GM10248 (cell line): ENCODE measurements at regions of chr1 and their contacts with region 1.

Region 1: DNA sequence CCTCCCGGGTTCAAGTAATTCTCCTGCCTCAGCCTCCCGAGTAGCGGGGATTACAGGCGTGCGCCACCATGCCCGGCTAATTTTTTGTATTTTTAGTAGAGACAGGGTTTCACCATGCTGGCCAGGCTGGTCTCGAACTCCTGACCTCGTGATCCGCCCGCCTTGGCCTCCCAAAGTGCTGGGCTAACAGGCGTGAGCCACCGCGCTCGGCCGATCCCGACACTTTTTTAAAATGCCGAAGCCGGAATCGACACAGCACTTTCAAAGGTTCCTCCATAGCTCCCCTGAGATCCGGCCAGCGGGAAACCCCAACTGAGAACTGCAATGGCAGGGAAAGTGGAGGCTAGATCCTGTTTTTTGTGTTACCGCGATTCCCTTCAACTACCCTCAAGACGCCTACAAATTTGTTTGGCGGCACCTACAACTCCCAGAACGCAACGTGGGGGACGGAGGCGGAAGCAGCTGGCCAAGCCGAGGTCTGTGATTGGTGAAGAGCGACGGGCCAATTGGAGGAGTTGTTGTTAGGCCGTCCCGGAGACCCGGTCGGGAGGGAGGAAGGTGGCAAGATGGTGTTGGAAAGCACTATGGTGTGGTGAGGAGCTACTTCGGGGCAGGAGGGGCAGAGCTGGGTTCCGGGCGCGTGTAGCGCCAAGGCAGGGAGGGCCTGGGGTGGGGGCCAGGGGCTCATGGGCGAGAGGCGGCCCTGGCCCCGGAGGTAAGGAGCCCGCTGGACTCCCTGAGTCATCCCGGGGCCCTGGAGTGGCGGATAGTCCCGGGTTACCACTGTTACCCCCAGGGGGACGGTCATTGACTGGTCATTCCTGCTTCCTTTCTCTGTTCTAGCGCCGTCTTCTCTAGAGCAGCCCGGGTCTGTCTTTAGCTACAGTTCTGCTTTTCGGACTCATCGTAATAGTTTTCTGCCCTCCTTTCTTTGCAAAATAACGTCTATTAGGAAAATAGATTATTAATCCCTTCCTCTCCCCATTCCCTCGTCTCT is at the start of gene PSMD4:
- DNase-seq: peak; percentile 99
- CTCF ChIP-seq: no peak

Region 2: GRCh38 chr1:150906341-150906740 is 348.2 kb before region 1 on chr1:
- CTCF ChIA-PET with region 1: no interaction called
- POLR2A ChIA-PET with region 1: no interaction called
- DNase-seq: no peak
- CTCF ChIP-seq: no peak

Region 3: DNA sequence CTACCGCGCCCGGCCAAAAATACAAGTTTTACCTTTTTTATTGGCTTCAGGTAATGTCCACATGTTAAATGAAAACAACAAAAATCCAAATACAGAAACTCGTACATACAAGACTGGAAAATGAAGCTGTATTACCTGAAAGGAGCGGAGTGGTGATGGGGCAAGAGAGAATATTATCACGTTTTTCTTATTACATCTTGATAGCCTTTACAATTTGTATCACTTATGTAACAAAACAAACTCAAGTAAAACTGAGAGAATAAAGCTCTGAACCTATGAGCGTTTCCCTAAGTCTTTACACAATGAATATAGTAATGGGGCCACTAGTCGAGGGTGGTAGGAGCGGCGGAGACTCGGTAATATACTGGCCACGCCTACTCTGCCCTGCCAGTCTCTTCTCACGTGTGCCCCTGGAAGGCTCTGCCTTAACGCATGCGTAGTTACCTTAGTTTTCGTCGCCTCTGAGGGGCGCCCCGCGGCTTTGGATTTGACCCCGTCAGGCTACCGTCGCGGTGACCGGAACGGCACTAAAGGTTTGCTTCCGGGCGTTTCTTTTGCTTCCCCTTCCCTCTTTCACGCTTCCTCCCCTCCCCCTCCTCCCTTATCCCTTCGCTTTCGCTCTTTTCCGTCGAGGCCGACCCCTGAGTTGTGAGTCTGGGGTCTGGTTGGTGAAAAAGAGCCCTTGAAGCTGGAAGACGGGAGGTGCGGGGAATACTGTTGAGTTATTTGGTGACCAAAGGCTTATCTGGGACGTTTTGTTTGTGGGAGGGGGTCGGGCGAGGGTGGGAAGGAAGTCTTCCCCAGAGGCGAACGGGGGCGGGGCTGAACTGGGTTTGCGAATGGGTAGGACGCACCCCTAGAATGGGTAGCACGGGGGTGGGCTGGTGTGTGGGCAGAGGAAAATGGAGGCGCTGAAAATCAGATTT is 328.4 kb before region 1 on chr1 and contains the start of gene SETDB1:
- CTCF ChIA-PET with region 1: no interaction called
- POLR2A ChIA-PET with region 1: no interaction called
- DNase-seq: peak; percentile 92
- CTCF ChIP-seq: peak; percentile 23

Region 4: GRCh38 chr1:151189638-151190445 is 64.7 kb before region 1 on chr1 and contains the start of gene VPS72:
- CTCF ChIA-PET with region 1: interaction called, 15 read pairs
- POLR2A ChIA-PET with region 1: interaction called, 3 read pairs
- DNase-seq: peak; percentile 94
- CTCF ChIP-seq: no peak

Region 5: GRCh38 chr1:151222130-151222529 is 32.4 kb before region 1 on chr1:
- CTCF ChIA-PET with region 1: interaction called, 10 read pairs
- POLR2A ChIA-PET with region 1: no interaction called
- DNase-seq: no peak
- CTCF ChIP-seq: no peak

Region 6: GRCh38 chr1:151238467-151238739 is 16.1 kb before region 1 on chr1:
- CTCF ChIA-PET with region 1: interaction called, 33 read pairs
- POLR2A ChIA-PET with region 1: no interaction called
- DNase-seq: no peak
- CTCF ChIP-seq: no peak

Region 7: GRCh38 chr1:151273925-151274466 is 19.5 kb after region 1 on chr1:
- CTCF ChIA-PET with region 1: interaction called, 16 read pairs
- POLR2A ChIA-PET with region 1: interaction called, 3 read pairs
- DNase-seq: no peak
- CTCF ChIP-seq: no peak

Region 8: DNA sequence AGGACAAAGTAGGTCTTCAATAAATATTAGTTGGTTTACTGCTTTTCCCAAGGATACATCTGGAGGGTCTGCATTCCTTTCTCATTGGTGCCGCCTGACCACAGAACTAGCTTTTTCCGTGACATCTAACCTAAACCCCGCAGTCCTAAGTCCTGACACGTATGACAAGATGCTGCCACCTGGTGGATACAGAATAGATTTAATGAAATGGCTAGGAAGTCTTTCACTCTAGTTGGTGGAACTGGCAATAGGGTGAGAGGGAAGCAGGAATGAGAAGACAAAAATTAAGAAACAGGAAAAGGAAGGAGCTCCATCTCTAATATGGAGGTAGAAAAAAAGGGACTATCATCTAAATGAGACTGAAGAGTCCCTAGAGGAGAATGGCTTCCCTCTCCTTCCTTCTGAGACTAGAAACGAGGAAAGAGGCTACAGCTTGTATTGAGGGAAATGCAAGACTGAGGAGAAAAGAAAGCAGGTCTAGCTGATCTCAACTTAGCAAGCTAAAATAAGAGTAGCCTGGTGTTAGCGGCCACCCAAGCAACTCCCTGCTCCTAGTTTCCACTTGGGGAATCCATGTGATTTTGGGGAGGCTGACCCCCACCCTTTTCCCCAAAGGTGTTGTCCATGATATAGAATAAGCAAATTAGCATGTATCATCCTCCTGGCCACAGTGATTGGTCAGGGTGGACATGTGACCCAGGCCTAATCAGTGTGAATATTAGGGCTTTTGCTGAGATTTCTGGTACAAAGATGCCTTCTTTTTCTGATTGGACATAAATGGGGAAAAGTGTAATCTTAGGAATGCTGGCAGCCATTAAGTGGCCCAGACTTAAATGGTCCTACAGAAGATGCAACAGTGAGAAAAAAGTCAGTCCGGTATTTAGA is 86.6 kb after region 1 on chr1:
- CTCF ChIA-PET with region 1: interaction called, 17 read pairs
- POLR2A ChIA-PET with region 1: no interaction called
- DNase-seq: peak; percentile 62
- CTCF ChIP-seq: peak; percentile 64

Region 9: GRCh38 chr1:151435160-151435559 is 180.6 kb after region 1 on chr1:
- CTCF ChIA-PET with region 1: no interaction called
- POLR2A ChIA-PET with region 1: no interaction called
- DNase-seq: no peak
- CTCF ChIP-seq: no peak